ENCODE measurements at regions of chr4 and their contacts with region 1.

Region 1: GRCh38 chr4:87973283-87974169 is 2.0 kb upstream of the SPP1 start:
- DNase-seq: peak; percentile 13 to 70
- ATAC-seq: peak; percentile 72 to 74
- H3K4me3 ChIP-seq: peak overlapping the region; percentile 30
- H3K27ac ChIP-seq: peak overlapping the region; percentile 76
- H3K4me1 ChIP-seq: peaks cover 28% of the 10 kb centered on the region
- CTCF ChIP-seq: peak; percentile 69
- EP300 ChIP-seq: no peak
- POLR2A ChIP-seq: no peak
- RAD21 ChIP-seq: peak; percentile 59 to 67

Region 2: DNA sequence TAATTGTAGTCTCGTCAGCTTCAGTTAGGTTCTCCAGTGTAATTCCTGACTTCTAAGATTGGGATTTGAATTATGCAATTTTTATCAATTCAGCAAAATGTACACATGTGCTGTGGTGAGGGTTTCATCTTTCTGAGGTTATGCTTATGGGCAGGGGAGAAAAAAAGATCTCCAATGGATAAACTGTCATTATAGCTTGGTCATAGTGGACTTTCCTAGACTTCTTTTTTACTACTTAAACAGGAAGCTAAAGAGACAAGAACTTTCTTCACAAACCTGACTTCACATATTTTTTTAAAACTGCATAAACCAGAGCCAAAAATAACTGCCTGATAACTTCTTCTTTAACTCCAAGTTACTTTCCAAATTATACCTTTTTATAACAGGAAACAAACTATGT is 19.7 kb before region 1 on chr4:
- CTCF ChIA-PET with region 1: interaction called, 18 read pairs
- POLR2A ChIA-PET with region 1: no interaction called
- DNase-seq: no peak
- ATAC-seq: no peak
- H3K4me3 ChIP-seq: no peak overlapping the region
- H3K27ac ChIP-seq: no peak overlapping the region
- H3K4me1 ChIP-seq: peaks cover 14% of the 10 kb centered on the region
- CTCF ChIP-seq: no peak
- EP300 ChIP-seq: no peak
- POLR2A ChIP-seq: no peak
- RAD21 ChIP-seq: no peak

Region 3: GRCh38 chr4:87961993-87962392 is 11.5 kb before region 1 on chr4:
- CTCF ChIA-PET with region 1: interaction called, 18 read pairs
- POLR2A ChIA-PET with region 1: no interaction called
- DNase-seq: peak in 1 of 2 experiments; percentile 49
- ATAC-seq: peak; percentile 74 to 79; a peak in 5 of 6 replicates
- H3K4me3 ChIP-seq: no peak overlapping the region
- H3K27ac ChIP-seq: peak overlapping the region; percentile 49 to 67
- H3K4me1 ChIP-seq: peaks cover 19% of the 10 kb centered on the region; the same call in 2 of the 3 replicates
- CTCF ChIP-seq: no peak
- EP300 ChIP-seq: no peak
- POLR2A ChIP-seq: no peak
- RAD21 ChIP-seq: no peak

Region 4: GRCh38 chr4:88115587-88115986 is 142.1 kb after region 1 on chr4:
- CTCF ChIA-PET with region 1: no interaction called
- POLR2A ChIA-PET with region 1: no interaction called
- DNase-seq: no peak
- ATAC-seq: no peak
- H3K4me3 ChIP-seq: no peak overlapping the region
- H3K27ac ChIP-seq: no peak overlapping the region
- H3K4me1 ChIP-seq: peaks cover 6% of the 10 kb centered on the region
- CTCF ChIP-seq: no peak
- EP300 ChIP-seq: no peak
- POLR2A ChIP-seq: no peak
- RAD21 ChIP-seq: no peak